Left colon (tissue), 2 donors: ENCODE measurements at regions of chr1 and their contacts with region 1.

Region 1: DNA sequence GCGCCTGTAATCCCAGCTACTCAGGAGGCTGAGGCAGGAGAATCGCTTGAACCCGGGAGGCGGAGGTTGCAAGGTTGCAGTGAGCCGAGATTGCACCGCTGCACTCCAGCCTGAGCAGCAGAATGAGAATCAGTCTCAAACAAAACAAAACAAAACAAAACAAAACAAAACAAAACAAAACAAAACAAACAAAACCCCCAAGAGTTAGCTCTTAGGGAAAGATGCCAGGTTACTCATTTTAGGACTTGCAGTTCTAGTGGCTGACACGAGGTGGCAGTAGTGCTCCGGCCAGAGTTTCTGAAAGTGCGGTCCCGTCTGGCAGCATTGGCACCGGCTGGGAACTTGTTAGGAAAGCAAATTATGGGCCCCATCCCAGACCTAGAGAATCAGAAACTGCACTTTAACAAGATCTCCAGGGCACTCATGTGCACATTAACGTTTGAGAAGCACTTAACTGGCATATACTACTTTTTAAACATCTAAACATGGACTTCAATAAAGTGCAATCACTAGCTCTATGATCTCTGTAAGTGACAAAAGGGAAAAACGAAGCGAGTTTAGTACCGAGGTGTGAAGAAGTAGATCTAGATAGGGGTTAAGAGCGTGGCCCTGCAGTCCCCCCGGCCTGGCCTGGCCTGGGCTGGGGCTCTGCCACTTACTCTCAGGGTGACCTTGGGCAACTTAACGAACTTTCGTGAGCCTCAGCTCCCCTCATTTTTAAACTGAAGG is 41.9 kb upstream of the TNFRSF1B start:
- DNase-seq: peak; percentile 59 to 78
- ATAC-seq: peak; percentile 70

Region 2: GRCh38 chr1:11985851-11986250 is 139.0 kb before region 1 on chr1:
- intact Hi-C with region 1: no loop called
- DNase-seq: no peak
- ATAC-seq: no peak

Region 3: GRCh38 chr1:12208764-12209494 is 84.1 kb after region 1 on chr1:
- intact Hi-C with region 1: loop called (anchors 2 to 5 kb)
- DNase-seq: peak; percentile 62 to 89
- ATAC-seq: peak; percentile 93